ENCODE measurements at regions of chr16 and their contacts with region 1.

Region 1: DNA sequence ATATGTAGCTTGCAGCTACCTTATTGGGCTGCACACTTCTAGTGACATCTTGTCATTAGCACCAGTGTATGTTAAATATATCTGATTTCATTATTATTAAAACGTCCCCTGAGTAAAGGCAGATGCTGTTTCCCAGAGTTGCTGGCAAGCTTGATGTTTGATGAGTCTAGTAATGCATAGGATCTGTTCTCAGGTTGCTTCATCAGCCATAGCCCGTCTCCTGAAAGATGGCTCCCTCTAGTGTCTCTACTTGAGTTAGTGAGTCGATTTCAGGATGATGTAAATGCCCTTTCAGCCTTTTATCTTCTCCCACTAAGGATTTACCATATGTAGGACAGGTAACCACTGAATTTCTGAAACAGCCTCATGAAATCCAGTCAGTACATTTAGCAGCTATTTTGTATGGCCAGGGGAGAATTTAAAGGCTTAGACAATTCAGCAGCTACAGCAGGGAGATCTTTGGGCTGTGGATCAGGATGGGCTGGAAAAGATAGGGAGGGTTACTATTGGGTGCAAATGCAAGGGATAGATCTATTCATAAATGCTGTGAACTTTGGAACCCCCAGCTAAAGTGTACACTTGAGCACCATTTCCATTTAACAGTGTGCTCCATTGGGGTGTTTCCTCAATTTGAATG is 376.3 kb downstream of the CNTNAP4 start:
- DNase-seq: peak; percentile 59
- H3K4me3 ChIP-seq: no peak overlapping the region
- H3K27ac ChIP-seq: no peak overlapping the region
- H3K4me1 ChIP-seq: no peaks in the 10 kb centered on the region
- CTCF ChIP-seq: peak; percentile 83

Region 2: DNA sequence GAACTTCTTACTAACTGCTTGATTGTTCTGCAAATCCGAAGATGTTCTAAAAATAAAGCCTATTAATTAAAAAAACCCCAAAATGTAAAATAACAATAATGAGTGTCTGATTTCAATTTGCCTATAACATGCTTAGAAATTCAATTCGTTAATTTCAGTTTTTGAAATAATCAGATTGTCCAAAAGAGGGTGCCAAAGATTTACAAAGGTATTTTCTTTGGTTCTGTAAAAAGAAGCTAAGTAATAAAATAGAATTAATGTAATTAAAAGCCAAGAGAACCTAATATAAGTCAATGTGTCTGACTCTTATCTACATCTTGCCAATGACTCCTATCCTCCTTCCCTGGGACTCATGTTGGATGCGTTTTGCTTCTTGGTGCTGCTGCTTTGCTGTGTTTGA is 852.2 kb before region 1 on chr16:
- CTCF ChIA-PET with region 1: no interaction called
- POLR2A ChIA-PET with region 1: no interaction called
- intact Hi-C with region 1: loop called (anchors 10 kb)
- DNase-seq: no peak
- H3K4me3 ChIP-seq: no peak overlapping the region
- H3K27ac ChIP-seq: no peak overlapping the region
- H3K4me1 ChIP-seq: no peaks in the 10 kb centered on the region
- CTCF ChIP-seq: peak; percentile 69

Region 3: GRCh38 chr16:76278980-76279379 is 374.5 kb before region 1 on chr16:
- CTCF ChIA-PET with region 1: no interaction called
- POLR2A ChIA-PET with region 1: no interaction called
- intact Hi-C with region 1: loop called (anchors 10 kb)
- DNase-seq: peak; percentile 45
- H3K4me3 ChIP-seq: no peak overlapping the region
- H3K27ac ChIP-seq: no peak overlapping the region
- H3K4me1 ChIP-seq: no peaks in the 10 kb centered on the region
- CTCF ChIP-seq: peak; percentile 75

Region 4: DNA sequence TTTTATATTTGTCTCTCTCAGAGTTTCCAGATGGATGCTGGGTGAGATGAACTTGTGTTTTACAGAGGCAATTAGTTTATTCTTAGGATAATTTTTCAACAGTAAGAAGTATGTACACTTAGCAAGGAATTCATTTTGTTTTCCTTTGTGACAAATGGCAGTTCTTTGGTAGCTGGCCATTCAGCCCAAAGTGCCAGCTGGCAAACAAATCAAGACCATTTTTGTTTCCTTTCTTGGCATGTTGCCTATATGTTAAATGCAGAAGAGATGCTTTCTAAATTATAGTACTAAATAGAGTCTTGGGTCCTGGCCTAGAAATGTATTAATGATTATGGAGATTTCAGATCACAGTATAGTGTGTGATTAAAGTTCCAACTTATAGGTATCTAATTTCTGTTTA is 39.2 kb before region 1 on chr16:
- CTCF ChIA-PET with region 1: no interaction called
- POLR2A ChIA-PET with region 1: no interaction called
- intact Hi-C with region 1: no loop called
- DNase-seq: no peak
- H3K4me3 ChIP-seq: no peak overlapping the region
- H3K27ac ChIP-seq: no peak overlapping the region
- H3K4me1 ChIP-seq: no peaks in the 10 kb centered on the region
- CTCF ChIP-seq: no peak